Caco-2 (cell line): ENCODE measurements at regions of chr2 and their contacts with region 1.

Region 1: GRCh38 chr2:79511320-79511951 is 1.4 kb upstream of the CTNNA2 start:
- DNase-seq: peak; percentile 62 to 64
- H3K4me3 ChIP-seq: no peak overlapping the region
- H3K4me3 Mint-ChIP-seq: no peak overlapping the region
- H3K27ac Mint-ChIP-seq: no peak overlapping the region
- H3K4me1 ChIP-seq: no peaks in the 10 kb centered on the region
- H3K4me1 Mint-ChIP-seq: no peaks in the 10 kb centered on the region
- H3K27me3 ChIP-seq: no peaks in the 10 kb centered on the region
- H3K27me3 Mint-ChIP-seq: peaks cover 10% of the 10 kb centered on the region
- CTCF ChIP-seq: no peak

Region 2: DNA sequence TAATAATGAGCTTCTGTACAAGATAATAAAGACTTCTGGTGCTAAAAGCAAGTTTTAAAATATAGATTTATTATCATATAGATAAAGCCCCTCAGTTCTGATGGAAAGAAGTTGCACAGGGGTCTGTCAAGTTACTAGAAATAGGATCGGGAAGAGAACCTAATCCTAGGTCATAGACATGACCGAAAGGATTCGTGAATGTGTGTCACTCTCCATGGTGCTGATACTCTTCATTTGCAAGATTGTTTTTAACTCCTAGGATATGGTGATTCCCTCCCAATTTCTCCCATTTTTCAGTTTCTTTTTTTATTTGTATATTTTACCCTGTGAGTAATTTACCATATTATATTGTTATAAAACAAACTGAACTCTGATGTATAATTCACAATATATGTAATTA is 57.5 kb before region 1 on chr2:
- CTCF ChIA-PET with region 1: no interaction called
- POLR2A ChIA-PET with region 1: no interaction called
- intact Hi-C with region 1: loop called (anchors 2 kb)
- DNase-seq: peak in 1 of 2 experiments; percentile 5
- H3K4me3 ChIP-seq: no peak overlapping the region
- H3K4me3 Mint-ChIP-seq: no peak overlapping the region
- H3K27ac Mint-ChIP-seq: no peak overlapping the region
- H3K4me1 ChIP-seq: no peaks in the 10 kb centered on the region
- H3K4me1 Mint-ChIP-seq: no peaks in the 10 kb centered on the region
- H3K27me3 ChIP-seq: no peaks in the 10 kb centered on the region
- H3K27me3 Mint-ChIP-seq: no peaks in the 10 kb centered on the region
- CTCF ChIP-seq: no peak

Region 3: GRCh38 chr2:79530443-79530842 is 19.0 kb after region 1 on chr2:
- CTCF ChIA-PET with region 1: no interaction called
- POLR2A ChIA-PET with region 1: no interaction called
- intact Hi-C with region 1: no loop called
- DNase-seq: peak in 1 of 2 experiments; percentile 10
- H3K4me3 ChIP-seq: no peak overlapping the region
- H3K4me3 Mint-ChIP-seq: no peak overlapping the region
- H3K27ac Mint-ChIP-seq: no peak overlapping the region
- H3K4me1 ChIP-seq: no peaks in the 10 kb centered on the region
- H3K4me1 Mint-ChIP-seq: no peaks in the 10 kb centered on the region
- H3K27me3 ChIP-seq: no peaks in the 10 kb centered on the region
- H3K27me3 Mint-ChIP-seq: peaks cover 4% of the 10 kb centered on the region
- CTCF ChIP-seq: peak in 1 of 2 experiments; percentile 28